GM13976 (cell line): ENCODE measurements at regions of chr16 and their contacts with region 1.

Region 1: GRCh38 chr16:17467923-17468540 is 2.7 kb downstream of the XYLT1 start:
- DNase-seq: no peak
- CTCF ChIP-seq: peak; percentile 84

Region 2: DNA sequence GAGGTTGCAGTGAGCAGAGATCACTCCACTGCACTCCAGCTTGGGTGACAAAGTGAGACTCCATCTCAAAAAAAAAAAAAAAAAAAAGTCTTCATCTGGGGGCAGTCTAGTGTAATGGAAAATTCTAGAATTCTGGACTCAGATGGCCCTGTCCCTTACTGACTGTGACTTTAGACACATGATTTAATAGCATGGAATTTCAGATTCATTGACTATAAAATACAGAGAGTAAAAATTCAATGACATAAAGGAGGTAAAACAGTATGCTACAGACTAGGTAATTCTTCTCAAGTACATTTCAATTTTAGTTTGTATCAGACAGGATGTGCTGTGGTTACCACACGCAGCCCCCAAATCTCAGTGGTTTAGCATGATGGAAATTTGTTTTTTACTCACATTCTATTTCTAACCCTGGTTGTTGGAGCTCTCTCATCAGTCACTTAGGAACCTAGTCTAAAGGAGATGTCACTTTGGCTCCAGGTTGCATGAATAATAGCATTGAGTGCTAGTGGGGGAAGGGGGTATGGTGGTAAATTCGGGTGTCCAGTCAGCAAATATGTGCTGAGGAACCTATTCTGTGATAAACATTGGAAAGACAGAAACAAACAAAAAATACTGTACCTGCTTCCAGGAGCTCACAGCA is 441.3 kb before region 1 on chr16:
- in situ Hi-C with region 1: loop called (anchors 25 kb)
- DNase-seq: peak; percentile 29
- CTCF ChIP-seq: no peak

Region 3: DNA sequence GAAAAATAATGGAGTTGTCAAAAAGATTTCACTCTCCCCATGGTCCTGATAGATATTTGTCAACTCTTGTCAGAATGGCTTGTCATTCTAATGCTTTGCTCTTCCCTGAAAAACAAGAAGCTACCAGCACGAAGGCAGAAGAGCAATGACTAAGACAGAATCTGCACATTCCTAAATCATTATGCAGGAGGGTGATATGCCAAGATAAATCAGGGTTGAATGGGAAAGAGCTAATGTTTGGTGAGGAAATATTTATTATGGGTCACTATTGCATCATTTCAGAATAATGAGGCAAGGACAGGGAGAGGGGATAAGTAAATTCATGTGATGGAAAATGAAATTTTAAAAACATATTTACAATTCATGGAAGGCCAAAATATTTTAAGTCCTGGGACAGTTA is 300.2 kb after region 1 on chr16:
- in situ Hi-C with region 1: no loop called
- DNase-seq: no peak
- CTCF ChIP-seq: no peak

Region 4: DNA sequence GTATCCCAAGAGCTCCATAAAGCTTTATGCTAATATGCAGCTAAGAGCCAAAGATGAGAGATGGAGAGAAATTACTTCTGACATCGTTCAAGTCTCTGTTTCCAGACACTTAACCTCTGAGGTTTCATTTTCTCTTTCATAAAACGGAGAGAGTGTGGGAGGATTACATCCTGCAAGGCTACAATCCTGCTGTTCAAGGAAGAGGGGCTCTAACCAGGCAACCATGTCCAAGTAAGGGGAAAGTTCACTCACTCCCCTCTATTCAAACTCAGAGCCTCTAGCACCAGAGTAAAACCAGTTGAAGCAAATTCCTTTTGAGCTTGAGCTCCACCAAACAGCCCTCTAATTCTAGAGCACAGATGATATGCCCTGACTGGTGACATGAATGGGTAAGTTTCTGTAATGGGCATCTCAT is 471.1 kb after region 1 on chr16:
- in situ Hi-C with region 1: no loop called
- DNase-seq: no peak
- CTCF ChIP-seq: no peak